A549 (cell line): ENCODE measurements at regions of chr10 and their contacts with region 1.

Region 1: GRCh38 chr10:121608469-121609190 is 10.4 kb upstream of the FGFR2 start:
- DNase-seq: peak; percentile 34 to 60
- ATAC-seq: peak; percentile 81 to 95
- H3K4me3 ChIP-seq: peak overlapping the region; percentile 27
- H3K27ac ChIP-seq: peak overlapping the region in 1 of 2 experiments; percentile 47; a peak in 1 of 6 replicates
- H3K4me1 ChIP-seq: 0 out of 3 replicates have a peak, but pooled peaks cover 4% of the 10 kb centered on the region
- CTCF ChIP-seq: peak; percentile 91
- EP300 ChIP-seq: no peak
- POLR2A ChIP-seq: no peak
- RAD21 ChIP-seq: peak; percentile 64 to 84

Region 2: DNA sequence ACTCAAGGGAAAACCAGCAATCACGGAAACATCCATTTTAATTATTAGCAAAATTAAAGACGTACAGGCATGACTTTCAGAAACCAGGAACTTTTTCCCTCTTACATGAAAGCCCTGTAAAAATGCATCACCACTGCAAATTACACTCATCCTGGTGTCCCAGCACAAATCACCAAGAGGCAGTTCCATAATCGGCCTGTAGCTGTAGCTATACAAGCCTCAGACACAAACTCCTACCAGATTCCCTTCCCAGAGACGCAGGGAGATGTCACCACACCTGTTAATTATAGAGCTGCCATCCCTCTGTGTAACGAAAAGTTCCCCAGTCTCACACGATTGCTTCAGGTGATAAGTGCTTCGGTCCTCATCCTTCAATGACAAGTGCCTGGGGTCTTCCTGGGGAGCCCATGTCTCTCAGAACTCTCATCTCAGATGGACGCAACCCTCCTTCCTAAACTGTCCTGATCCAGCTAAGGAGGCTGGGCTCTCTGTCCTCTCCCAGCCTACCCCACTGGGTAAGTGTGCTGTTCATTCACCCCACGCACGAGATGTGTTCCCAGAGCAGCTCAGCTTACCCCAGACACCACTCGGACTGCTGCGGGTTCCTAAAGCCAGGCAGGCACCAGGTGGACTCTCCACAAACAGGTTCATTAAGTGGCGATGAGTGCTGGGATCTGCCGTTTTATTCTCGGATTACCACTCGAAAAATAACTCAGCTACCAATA is 16.3 kb before region 1 on chr10:
- CTCF ChIA-PET with region 1: interaction called, 16 read pairs
- POLR2A ChIA-PET with region 1: no interaction called
- DNase-seq: peak in 1 of 2 experiments; percentile 56
- ATAC-seq: peak; percentile 41 to 74; a peak in 4 of 6 replicates
- H3K4me3 ChIP-seq: no peak overlapping the region
- H3K27ac ChIP-seq: no peak overlapping the region
- H3K4me1 ChIP-seq: peaks cover 3% of the 10 kb centered on the region; the same call in 2 of the 3 replicates
- CTCF ChIP-seq: no peak
- EP300 ChIP-seq: no peak
- POLR2A ChIP-seq: no peak
- RAD21 ChIP-seq: no peak

Region 3: DNA sequence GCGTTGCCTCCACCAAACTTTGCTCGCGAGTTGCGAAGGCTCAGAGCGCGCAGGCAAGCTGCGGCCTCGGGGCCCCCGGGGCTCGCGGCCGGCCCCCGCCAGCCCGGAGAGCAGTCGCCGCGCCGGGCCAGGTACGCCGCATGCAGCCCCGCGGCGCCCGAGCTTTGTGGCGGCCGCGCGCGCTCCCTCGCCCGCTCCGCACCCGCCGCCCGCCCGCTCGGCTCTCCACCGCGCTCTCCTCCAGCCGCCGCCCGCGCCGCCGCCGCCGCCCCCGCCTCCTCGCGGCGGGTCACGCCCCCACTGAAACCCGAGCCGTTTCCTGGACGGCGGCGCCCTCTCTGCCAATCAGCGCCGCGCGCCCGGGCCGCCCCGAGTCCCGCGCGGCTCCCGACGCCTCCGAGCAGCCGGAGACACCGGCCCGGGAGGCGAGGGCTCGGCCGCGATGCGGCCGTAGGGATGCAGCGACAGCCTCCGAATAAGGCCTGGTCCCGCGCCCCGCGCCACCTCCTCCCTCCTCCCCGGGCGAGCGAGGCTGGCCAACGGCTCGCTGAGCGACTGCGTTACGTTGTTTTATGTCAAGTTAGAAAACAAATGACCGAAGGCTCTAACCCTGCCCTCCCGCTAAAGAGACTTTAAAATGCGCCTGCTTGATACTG is 10.3 kb before region 1 on chr10 and contains the start of gene FGFR2:
- CTCF ChIA-PET with region 1: interaction called, 16 read pairs
- POLR2A ChIA-PET with region 1: no interaction called
- DNase-seq: peak; percentile 64 to 82
- ATAC-seq: peak; percentile 92 to 97
- H3K4me3 ChIP-seq: peak within 1 kb of the TSS; percentile 54
- H3K27ac ChIP-seq: peak within 1 kb of the TSS in 1 of 2 experiments; percentile 66; a peak in 4 of 6 replicates
- H3K4me1 ChIP-seq: peaks cover 14% of the 10 kb centered on the region; the same call in 2 of the 3 replicates
- CTCF ChIP-seq: no peak
- EP300 ChIP-seq: no peak
- POLR2A ChIP-seq: no peak
- RAD21 ChIP-seq: no peak
- polyA plus RNA-seq, gene FGFR2: 0.16 and 0.25 TPM in 2 replicates

Region 4: GRCh38 chr10:121624836-121625486 is 16.3 kb after region 1 on chr10:
- CTCF ChIA-PET with region 1: interaction called, 25 read pairs
- POLR2A ChIA-PET with region 1: no interaction called
- DNase-seq: no peak
- ATAC-seq: peak in 1 of 2 experiments; percentile 27; a peak in 1 of 6 replicates
- H3K4me3 ChIP-seq: no peak overlapping the region
- H3K27ac ChIP-seq: no peak overlapping the region
- H3K4me1 ChIP-seq: no peaks in the 10 kb centered on the region
- CTCF ChIP-seq: no peak
- EP300 ChIP-seq: no peak
- POLR2A ChIP-seq: no peak
- RAD21 ChIP-seq: no peak

Region 5: DNA sequence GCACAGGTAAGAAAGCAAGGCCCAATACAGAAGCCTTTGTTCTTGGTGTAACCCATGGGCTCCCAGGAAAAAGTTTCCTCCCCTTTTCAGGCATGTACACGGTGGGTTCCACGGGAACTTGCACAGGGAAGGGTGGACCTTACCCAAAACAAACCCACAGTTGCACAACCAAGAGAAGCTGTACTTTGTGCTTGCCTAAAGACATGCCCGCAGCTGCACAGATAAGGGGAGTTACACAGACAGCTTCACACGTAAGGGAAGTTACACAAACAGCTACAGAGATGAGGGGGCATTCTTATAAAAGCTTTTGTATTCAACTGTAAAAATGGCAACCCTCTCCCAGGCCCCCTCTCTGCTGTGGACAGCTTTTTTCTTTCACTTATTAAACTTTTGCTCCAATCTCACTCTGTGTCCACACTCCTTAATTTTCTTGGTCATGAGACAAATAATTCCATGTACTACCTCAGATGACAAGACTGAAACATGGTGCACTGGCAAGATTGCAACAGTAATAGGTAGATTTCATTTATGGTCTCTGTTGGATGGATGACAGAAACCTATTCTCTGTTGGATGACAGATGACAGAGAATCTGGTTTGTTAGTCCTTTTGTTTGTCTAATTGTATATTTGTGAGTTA is 246.3 kb after region 1 on chr10:
- CTCF ChIA-PET with region 1: no interaction called
- POLR2A ChIA-PET with region 1: no interaction called
- DNase-seq: no peak
- ATAC-seq: no peak
- H3K4me3 ChIP-seq: no peak overlapping the region
- H3K27ac ChIP-seq: no peak overlapping the region
- H3K4me1 ChIP-seq: no peaks in the 10 kb centered on the region
- CTCF ChIP-seq: no peak
- EP300 ChIP-seq: no peak
- POLR2A ChIP-seq: no peak
- RAD21 ChIP-seq: no peak